ENCODE measurements at regions of chr2 and their contacts with region 1.

Region 1: GRCh38 chr2:55010149-55010591 is 40.1 kb downstream of the RTN4 start:
- DNase-seq: peak; percentile 82
- H3K4me3 Mint-ChIP-seq: peak overlapping the region; percentile 88
- H3K27ac Mint-ChIP-seq: peak overlapping the region; percentile 82
- H3K4me1 Mint-ChIP-seq: peaks cover 37% of the 10 kb centered on the region
- H3K27me3 Mint-ChIP-seq: no peaks in the 10 kb centered on the region

Region 2: DNA sequence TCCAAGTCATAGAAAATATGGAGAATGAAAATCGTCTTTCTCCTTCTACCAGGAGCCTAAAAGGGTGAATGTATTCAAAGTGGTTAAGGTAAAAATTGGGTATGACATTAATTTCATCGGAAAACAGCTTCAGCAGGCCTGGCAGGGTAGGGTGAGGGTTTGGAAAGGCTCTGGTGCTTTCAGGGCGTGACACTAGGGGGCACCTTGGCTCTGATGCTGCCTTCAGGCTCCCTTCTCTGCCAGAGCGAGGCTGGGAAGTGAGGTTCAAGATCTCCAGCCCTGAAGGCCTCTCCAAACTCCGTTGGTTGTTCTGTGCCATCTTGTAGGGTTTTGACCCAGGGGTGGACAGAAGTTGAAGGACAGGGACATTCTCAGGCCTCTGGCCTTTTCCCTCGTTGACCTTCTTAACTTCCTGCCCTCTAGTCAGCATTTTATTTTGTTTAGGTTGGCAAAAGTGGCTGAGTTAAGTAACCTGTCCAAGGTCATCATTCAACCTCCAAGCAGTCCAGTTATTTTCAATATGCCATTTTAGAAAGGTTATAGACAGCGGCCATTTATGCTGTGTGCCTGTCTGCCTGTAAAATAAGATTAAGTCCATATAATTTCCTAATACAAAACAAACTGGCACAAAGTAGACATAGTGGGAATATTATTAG is 246.4 kb before region 1 on chr2:
- intact Hi-C with region 1: loop called (anchors 10 kb)
- DNase-seq: peak; percentile 63
- H3K4me3 Mint-ChIP-seq: no peak overlapping the region
- H3K27ac Mint-ChIP-seq: no peak overlapping the region
- H3K4me1 Mint-ChIP-seq: peaks cover 7% of the 10 kb centered on the region
- H3K27me3 Mint-ChIP-seq: peaks cover 11% of the 10 kb centered on the region

Measured in activated CD4-positive, alpha-beta T cell treated with anti-CD3 and anti-CD28 coated beads, Interleukin-2, amount 10 ng/mL, durations not matched to agents 24 days and 14 days (primary cell).